ENCODE measurements at regions of chr2 and their contacts with region 1.

Region 1: DNA sequence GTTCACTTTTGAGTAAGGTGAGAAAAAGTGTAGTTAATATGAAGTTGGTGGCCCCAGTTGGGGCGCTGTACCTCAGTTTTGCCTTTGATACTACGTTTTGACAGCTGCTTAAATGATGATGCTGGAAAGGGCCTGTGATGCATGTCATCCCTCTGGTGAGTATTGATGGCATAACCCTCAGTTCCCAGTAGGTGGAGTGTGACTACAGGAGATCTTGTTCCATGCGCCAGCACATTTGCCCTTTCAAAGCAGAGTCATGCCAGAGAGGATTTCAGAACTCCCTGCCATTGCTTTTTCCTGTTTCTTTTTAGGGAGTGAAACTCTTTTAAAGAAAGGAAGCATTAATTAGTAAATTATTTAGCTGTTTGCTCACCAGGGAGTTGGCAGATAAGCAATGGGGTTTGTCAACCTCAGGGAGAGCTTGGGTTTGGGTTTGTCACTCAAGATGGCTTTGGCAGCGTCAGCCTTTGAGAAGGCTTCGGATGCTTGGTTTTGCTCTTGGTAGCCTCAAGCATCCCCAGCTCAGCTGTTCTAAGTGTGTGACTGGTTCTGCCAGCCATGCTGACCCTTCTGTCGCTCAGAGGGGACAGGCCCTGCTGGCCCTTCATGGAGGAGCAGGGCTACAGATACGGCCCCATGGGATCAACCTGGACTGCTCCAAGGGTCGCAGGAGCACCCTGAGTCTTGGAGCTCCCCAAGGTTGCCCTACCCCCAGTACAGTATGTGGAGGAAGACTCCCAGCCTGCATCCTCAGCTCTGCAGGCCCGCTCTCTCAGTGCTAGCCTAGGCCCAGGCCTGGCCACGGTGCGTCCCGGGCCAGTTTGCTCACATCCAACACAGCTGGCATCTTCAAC is 29.1 kb downstream of the ARMC9 start:
- DNase-seq: peak; percentile 34
- H3K4me3 Mint-ChIP-seq: no peak overlapping the region
- H3K27ac Mint-ChIP-seq: no peak overlapping the region
- H3K4me1 Mint-ChIP-seq: no peaks in the 10 kb centered on the region
- H3K27me3 Mint-ChIP-seq: no peaks in the 10 kb centered on the region

Region 2: GRCh38 chr2:230326453-230327417 is 900.8 kb before region 1 on chr2 and contains the start of gene SP140L:
- intact Hi-C with region 1: no loop called
- DNase-seq: peak; percentile 76
- H3K4me3 Mint-ChIP-seq: peak within 1 kb of the TSS; percentile 91
- H3K27ac Mint-ChIP-seq: peak within 1 kb of the TSS; percentile 92
- H3K4me1 Mint-ChIP-seq: peaks cover 67% of the 10 kb centered on the region
- H3K27me3 Mint-ChIP-seq: no peaks in the 10 kb centered on the region
- total RNA-seq, gene SP140L: 55.7 and 59.1 TPM in 2 replicates

Region 3: DNA sequence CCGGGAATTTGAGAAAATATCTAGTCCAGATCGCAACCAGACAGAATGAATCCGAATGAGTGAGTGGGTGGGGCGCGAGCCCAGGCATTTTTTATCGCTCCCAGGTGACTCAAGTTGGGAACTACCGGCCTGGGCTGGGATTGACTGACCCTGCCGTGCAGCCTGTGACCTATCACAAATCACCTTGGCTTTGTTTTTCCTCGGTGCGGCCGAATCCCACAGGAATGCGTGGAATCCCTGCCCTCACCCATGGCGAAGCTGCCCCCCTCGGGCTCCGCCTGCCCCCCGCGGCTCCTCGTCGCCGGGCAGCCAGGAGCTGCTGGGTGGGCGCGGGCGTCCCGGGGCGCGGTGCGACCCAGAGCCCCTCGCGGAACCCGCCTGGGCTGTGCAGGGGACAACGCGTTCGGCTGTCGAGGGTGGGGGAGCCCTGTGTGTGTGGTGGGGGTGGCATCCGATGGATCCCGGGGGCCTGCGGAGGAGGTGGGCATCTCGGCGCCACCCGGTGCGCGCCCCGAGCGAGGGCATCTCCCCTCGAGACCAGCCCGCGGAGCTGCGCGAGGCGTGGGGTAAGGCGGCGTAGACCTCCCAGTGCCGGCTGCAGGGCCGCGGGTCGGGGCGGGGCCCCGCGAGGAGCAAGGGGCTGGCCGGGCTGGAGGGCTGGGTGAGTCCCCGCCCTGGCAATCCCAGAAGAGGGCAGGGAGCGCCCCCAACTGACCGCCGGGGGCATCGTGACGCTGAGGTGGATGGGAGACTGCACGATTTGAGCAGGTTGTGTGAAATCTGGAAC is 184.5 kb after region 1 on chr2:
- intact Hi-C with region 1: loop called (anchors 10 kb)
- DNase-seq: peak; percentile 43
- H3K4me3 Mint-ChIP-seq: no peak overlapping the region
- H3K27ac Mint-ChIP-seq: no peak overlapping the region
- H3K4me1 Mint-ChIP-seq: peaks cover 3% of the 10 kb centered on the region
- H3K27me3 Mint-ChIP-seq: peaks cover 34% of the 10 kb centered on the region

Region 4: GRCh38 chr2:231452799-231453508 is 225.4 kb after region 1 on chr2:
- intact Hi-C with region 1: loop called (anchors 1 kb)
- DNase-seq: no peak
- H3K4me3 Mint-ChIP-seq: no peak overlapping the region
- H3K27ac Mint-ChIP-seq: peak overlapping the region; percentile 21
- H3K4me1 Mint-ChIP-seq: peaks cover 5% of the 10 kb centered on the region
- H3K27me3 Mint-ChIP-seq: no peaks in the 10 kb centered on the region

Region 5: GRCh38 chr2:232327105-232328041 is 1099.8 kb after region 1 on chr2:
- intact Hi-C with region 1: no loop called
- DNase-seq: peak; percentile 77
- H3K4me3 Mint-ChIP-seq: no peak overlapping the region
- H3K27ac Mint-ChIP-seq: no peak overlapping the region
- H3K4me1 Mint-ChIP-seq: peaks cover 5% of the 10 kb centered on the region
- H3K27me3 Mint-ChIP-seq: no peaks in the 10 kb centered on the region

Measured in activated T-helper 2 cell treated with anti-CD3 and anti-CD28 coated beads, Interferon-gamma antibody, Interleukin-2, Interleukin-4, amounts not matched to agents 10 μg/mL and 5 μg/mL and 100 μg/mL, durations not matched to agents 14 hours and 24 hours and 36 hours (primary cell).